ENCODE measurements at regions of chr15 and their contacts with region 1.

Region 1: GRCh38 chr15:34252545-34252944 is 27.7 kb downstream of the EMC4 start:
- H3K4me3 ChIP-seq: no peak overlapping the region
- H3K27ac ChIP-seq: no peak overlapping the region
- H3K4me1 ChIP-seq: no peaks in the 10 kb centered on the region
- CTCF ChIP-seq: no peak

Region 2: GRCh38 chr15:34241372-34242330 is 10.9 kb before region 1 on chr15:
- CTCF ChIA-PET with region 1: interaction called, 12 read pairs
- POLR2A ChIA-PET with region 1: no interaction called
- H3K4me3 ChIP-seq: no peak overlapping the region
- H3K27ac ChIP-seq: no peak overlapping the region
- H3K4me1 ChIP-seq: no peaks in the 10 kb centered on the region
- CTCF ChIP-seq: no peak